ENCODE measurements at regions of chr19 and their contacts with region 1.

Region 1: GRCh38 chr19:11887611-11888531 is at the start of gene ZNF69:
- DNase-seq: peak; percentile 93
- H3K4me3 ChIP-seq: peak within 1 kb of the TSS; percentile 87
- H3K27ac ChIP-seq: peak within 1 kb of the TSS; percentile 90
- H3K4me1 ChIP-seq: peaks cover 19% of the 10 kb centered on the region
- H3K27me3 ChIP-seq: no peaks in the 10 kb centered on the region
- CTCF ChIP-seq: peak; percentile 49
- total RNA-seq, gene ZNF69: 5.2 TPM

Region 2: DNA sequence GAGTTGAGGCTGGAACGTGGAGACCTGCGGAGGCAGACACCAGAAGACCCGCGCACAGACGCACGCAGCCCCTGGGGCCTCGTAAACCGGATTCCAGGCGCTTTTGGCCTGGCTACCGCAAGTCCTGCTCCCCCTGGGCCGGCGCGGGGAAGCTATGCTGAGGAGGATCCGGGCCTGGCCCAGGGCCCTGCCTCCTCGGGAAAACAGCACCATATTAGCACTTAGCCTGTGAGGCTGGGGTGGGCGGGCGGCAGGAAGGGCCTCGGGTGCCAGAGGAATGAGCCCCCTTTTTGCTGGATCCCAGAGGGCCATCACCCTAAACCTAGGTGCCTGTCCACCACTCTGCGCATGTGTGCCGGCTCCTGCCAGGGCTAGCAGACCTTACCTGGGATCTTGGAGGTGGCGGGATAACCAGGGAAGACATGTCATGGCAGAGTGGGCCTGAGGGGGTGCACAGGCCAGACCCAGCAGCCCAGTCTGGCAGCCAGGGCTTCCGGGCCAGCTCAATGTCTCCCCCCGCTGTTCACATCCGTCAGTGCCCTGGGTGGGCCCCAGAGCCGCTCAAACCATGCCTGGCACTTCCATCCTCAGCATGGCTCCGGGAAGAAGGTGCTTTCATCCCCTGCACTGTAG is 336.2 kb before region 1 on chr19:
- intact Hi-C with region 1: no loop called
- DNase-seq: no peak
- H3K4me3 ChIP-seq: no peak overlapping the region
- H3K27ac ChIP-seq: no peak overlapping the region
- H3K4me1 ChIP-seq: peaks cover 18% of the 10 kb centered on the region
- H3K27me3 ChIP-seq: no peaks in the 10 kb centered on the region
- CTCF ChIP-seq: peak; percentile 35

Region 3: GRCh38 chr19:11995174-11995573 is 107.3 kb after region 1 on chr19:
- intact Hi-C with region 1: loop called (anchors 10 kb)
- DNase-seq: no peak
- H3K4me3 ChIP-seq: no peak overlapping the region
- H3K27ac ChIP-seq: no peak overlapping the region
- H3K4me1 ChIP-seq: peaks cover 8% of the 10 kb centered on the region
- H3K27me3 ChIP-seq: no peaks in the 10 kb centered on the region
- CTCF ChIP-seq: no peak

Measured in left ventricle myocardium inferior (tissue), 1 donor.